IMR-90 (cell line): ENCODE measurements at regions of chr2 and their contacts with region 1.

Region 1: DNA sequence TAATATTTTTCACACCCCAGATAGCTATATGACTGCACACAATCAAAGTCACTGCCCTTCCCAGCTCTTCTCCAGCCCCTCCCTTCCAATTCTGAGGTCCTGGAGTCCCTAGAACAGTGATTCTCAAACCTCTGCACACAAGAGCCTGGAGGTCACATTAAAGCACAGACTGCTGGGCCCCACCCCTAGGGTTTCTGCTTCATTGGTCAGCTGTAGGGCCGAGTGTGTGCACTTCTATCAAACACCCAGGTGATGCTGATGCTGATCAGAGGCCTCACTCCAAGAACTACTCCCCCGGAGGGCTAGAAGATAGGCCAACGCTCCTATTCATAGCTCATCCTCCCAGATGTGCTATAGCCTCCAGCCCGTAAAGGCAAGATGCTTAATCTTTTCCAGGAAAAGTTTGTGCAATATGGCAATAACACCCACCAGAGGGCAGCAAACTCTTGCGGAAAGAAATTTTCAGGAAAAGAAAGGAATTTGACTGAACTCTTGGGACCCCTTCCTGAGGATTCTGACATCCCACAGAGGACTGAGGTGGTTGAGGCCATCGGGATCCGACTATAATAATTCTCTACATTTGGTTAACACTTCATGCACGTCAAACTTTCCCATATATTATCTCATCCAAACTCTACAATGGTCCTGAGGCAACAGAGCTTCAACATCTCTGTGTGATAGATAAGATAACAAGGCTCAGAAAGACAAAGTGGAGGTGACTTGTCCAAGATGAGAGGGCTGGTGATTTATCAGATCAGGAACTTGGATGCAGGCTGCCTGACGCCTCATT is 194.2 kb upstream of the PKDCC start:
- DNase-seq: peak; percentile 65
- ATAC-seq: peak; percentile 73
- H3K4me3 ChIP-seq: no peak overlapping the region
- H3K27ac ChIP-seq: no peak overlapping the region
- H3K4me1 ChIP-seq: peaks cover 2% of the 10 kb centered on the region; the same call in 1 of the 2 replicates
- H3K27me3 ChIP-seq: peaks cover 16% of the 10 kb centered on the region
- CTCF ChIP-seq: peak; percentile 79
- POLR2A ChIP-seq: no peak
- RAD21 ChIP-seq: peak; percentile 84

Region 2: GRCh38 chr2:42328148-42328833 is 474.7 kb after region 1 on chr2:
- CTCF ChIA-PET with region 1: interaction called, 3 read pairs
- POLR2A ChIA-PET with region 1: no interaction called
- dilution Hi-C with region 1: no loop called
- in situ Hi-C with region 1: loop called (anchors 10 kb)
- intact Hi-C with region 1: no loop called
- DNase-seq: peak; percentile 57
- ATAC-seq: peak; percentile 56; the same call in 1 of the 2 replicates
- H3K4me3 ChIP-seq: no peak overlapping the region
- H3K27ac ChIP-seq: no peak overlapping the region
- H3K4me1 ChIP-seq: no peaks in the 10 kb centered on the region; the same call in 1 of the 2 replicates
- H3K27me3 ChIP-seq: no peaks in the 10 kb centered on the region
- CTCF ChIP-seq: peak; percentile 58
- POLR2A ChIP-seq: no peak
- RAD21 ChIP-seq: peak; percentile 57

Region 3: DNA sequence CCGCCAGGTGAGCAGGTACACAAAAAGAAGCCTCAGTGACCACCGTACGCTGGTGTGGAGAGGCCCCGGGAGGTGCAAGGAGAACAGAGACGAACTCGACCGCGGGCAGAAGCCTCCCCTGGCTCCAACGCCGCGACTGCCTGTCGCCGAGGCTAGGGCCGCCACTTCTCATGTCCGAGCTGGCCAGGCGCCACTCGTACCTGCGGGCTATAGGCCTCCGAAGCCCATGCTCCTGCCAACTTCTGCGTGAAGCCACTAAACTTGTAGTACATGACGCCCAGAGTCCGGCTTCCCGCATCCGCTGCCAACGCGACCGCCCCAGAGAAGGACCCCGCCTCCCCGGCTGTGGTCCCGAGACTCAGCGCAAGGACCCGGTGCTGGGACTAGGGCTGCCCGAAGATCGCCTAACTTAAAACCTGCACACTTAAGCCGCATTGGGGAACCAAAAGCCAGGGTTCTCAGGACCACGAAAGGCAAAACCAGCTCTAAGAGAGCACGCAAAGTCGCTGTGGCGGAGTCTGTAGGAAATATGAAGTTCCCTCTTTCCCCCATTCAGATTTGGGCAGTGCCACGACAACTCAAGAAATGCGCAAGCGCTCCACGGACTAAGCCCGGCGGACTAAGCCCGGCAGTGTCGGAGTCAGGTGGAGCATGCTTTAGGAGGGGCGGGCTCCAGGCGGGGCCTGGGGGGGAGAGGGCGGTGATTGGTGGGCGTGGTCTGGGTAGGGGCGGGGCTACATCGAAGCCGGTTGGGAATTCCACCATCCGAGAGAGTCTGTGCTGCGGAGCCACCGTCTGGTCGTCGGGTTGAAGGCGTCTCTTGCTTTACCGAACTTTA is 507.5 kb after region 1 on chr2 and contains the start of gene COX7A2L:
- CTCF ChIA-PET with region 1: no interaction called
- POLR2A ChIA-PET with region 1: no interaction called
- dilution Hi-C with region 1: no loop called
- in situ Hi-C with region 1: no loop called
- intact Hi-C with region 1: loop called (anchors 10 kb)
- DNase-seq: peak; percentile 97
- ATAC-seq: peak; percentile 99
- H3K4me3 ChIP-seq: peak within 1 kb of the TSS; percentile 86
- H3K27ac ChIP-seq: peak within 1 kb of the TSS; percentile 94
- H3K4me1 ChIP-seq: peaks cover 4% of the 10 kb centered on the region
- H3K27me3 ChIP-seq: peaks cover 4% of the 10 kb centered on the region
- CTCF ChIP-seq: peak; percentile 46
- POLR2A ChIP-seq: peak; percentile 92
- RAD21 ChIP-seq: peak; percentile 52
- total RNA-seq, gene COX7A2L: 123 and 192 TPM in 2 replicates

Region 4: DNA sequence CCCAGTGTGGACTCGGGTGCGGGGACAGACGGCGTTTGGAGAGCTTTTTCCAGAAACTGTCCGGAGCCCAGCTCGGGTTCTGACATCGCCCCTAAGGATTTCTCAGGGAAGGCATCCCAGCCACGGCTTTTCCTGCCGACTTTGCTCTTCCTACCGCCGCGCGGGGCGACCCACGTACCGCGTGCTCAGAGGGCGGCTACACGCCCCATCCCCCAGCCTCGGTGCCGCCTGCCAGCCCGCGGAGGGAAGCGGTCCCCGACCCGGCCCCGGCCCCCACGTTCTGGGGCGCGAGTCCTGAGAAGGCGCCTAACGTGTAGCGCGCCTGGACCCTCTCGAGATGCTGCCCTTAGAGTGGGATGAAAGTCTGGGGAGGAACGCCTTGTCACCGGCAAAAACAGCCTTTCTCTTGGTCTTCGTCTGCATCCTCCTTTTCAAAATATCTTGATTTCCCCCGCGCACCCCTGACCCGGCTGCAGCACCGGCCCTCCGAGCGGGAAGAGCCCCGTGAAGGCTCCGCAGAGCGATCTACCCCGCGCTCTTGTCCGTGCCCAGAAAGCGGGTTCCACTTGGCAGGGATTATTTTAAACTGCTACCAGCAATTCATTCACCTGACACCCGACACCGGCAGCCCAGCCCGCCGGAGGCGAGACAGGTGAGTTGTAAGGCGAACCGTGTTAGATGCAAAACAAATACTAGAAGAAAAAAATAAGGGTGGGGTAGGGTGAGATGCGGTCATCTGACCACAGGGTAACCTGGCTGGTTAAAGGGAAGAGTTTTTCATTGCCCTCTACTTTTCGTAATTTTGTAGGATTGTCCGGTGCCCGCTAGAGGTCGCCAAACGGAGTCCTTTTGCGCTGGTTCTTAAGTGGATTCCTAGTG is 641.0 kb after region 1 on chr2:
- CTCF ChIA-PET with region 1: no interaction called
- POLR2A ChIA-PET with region 1: no interaction called
- dilution Hi-C with region 1: no loop called
- in situ Hi-C with region 1: no loop called
- intact Hi-C with region 1: loop called (anchors 10 kb)
- DNase-seq: peak; percentile 75
- ATAC-seq: peak; percentile 72
- H3K4me3 ChIP-seq: peak overlapping the region; percentile 31
- H3K27ac ChIP-seq: no peak overlapping the region
- H3K4me1 ChIP-seq: no peaks in the 10 kb centered on the region
- H3K27me3 ChIP-seq: peaks cover 52% of the 10 kb centered on the region
- CTCF ChIP-seq: peak; percentile 86
- POLR2A ChIP-seq: no peak
- RAD21 ChIP-seq: peak; percentile 76